ENCODE measurements at regions of chr6 and their contacts with region 1.

Region 1: DNA sequence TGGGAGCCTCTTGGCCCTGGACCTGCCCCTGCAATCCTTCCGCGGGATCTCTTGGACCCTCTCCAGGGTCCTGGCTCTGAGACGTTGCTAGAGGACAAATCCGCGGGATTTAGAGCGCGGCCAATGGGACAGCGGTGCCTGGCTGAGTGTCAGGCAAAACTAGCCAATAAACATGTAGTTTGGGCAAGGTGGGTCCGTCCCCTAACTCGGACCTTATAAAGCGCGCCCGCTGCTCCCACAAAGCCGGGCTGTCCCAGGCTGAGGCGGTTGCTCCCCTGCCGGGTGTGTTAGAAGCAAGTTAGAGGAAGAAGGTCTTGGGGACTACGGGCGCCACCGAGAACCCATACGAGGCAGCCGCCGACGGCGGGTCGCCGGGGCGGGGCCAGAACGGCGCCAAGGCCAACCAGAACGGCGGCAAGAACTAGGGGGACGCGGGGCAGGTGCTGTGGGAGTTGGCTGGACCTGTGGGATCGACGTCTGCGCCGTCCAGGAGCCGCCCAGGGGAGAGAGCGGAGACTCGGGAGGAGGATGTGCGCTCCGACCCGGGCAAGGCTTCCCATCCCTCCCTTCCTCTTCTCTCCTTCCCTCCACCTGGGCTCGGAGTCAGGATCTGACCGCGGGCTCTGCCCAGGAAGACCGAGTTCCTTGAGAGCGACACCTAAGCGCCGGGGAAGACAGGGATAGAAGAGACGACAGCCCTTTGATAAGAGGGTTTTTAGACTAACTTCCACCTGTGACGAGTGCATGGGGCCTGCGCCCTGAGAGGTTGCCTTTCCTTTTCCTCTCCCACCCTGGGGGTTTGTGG is 6.5 kb upstream of the TMEM14A start:
- DNase-seq: peak; percentile 94
- ATAC-seq: peak; percentile 98
- H3K4me3 ChIP-seq: peak overlapping the region; percentile 56 to 66
- H3K27ac ChIP-seq: peak overlapping the region in 1 of 2 donors; percentile 17
- H3K4me1 ChIP-seq: no peaks in the 10 kb centered on the region
- H3K27me3 ChIP-seq: no peaks in the 10 kb centered on the region

Region 2: DNA sequence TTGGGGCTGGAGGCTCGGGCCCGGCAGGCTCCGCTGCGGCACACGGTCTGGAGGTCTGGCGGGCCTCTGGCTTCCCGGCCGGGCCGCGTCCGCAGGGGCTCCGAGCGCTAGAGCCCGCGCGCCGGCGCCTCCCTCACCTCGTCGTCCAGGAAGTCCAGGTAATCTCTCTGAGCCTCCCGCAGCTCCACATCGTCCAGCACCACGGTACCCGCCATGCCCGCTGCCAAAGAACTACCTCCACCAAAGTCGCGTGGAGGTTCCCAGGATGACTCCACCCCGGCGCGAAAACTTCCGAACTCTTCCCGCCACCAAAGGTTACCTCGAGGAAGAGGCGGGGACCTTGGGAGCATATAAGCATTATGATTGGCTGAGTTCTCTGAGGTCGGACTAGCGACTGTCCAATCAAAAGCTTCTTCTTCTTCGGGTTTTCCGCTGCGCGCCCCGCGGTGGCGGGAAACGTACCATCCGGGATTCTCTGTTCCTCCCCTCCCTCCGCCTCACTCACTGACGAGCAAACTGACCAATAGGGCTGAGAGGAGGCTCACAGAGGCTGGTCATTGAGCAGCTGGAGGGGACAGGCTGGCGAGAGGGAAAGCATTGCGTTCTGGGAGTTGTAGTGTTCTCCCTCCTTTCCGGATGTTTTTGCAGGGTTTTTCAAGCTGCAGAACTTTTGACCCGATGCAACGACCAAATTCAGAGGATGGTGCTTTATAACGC is 379.8 kb before region 1 on chr6 and contains the start of gene MCM3:
- intact Hi-C with region 1: loop called (anchors 2 to 10 kb)
- DNase-seq: peak; percentile 97 to 98
- ATAC-seq: peak; percentile 100
- H3K4me3 ChIP-seq: peak within 1 kb of the TSS; percentile 59 to 63
- H3K27ac ChIP-seq: peak within 1 kb of the TSS in 1 of 2 donors; percentile 5
- H3K4me1 ChIP-seq: peaks cover 2 to 4% of the 10 kb centered on the region in 2 donors
- H3K27me3 ChIP-seq: no peaks in the 10 kb centered on the region
- total RNA-seq, gene MCM3: 24.5 to 30.5 TPM

Region 3: GRCh38 chr6:52419809-52420670 is 244.3 kb before region 1 on chr6 and contains the start of gene EFHC1:
- intact Hi-C with region 1: loop called (anchors 1 to 2 kb)
- DNase-seq: peak; percentile 99 to 100
- ATAC-seq: peak; percentile 99
- H3K4me3 ChIP-seq: peak within 1 kb of the TSS; percentile 46 to 61
- H3K27ac ChIP-seq: peak within 1 kb of the TSS in 1 of 2 donors; percentile 73
- H3K4me1 ChIP-seq: peaks cover 0 to 5% of the 10 kb centered on the region in 2 donors
- H3K27me3 ChIP-seq: no peaks in the 10 kb centered on the region
- total RNA-seq, gene EFHC1: 13.2 to 29.0 TPM

Region 4: GRCh38 chr6:52497652-52498408 is 166.6 kb before region 1 on chr6:
- intact Hi-C with region 1: loop called (anchors 5 to 10 kb)
- DNase-seq: no peak
- ATAC-seq: no peak
- H3K4me3 ChIP-seq: no peak overlapping the region
- H3K27ac ChIP-seq: peak overlapping the region; percentile 75 to 79
- H3K4me1 ChIP-seq: peaks cover 6 to 12% of the 10 kb centered on the region in 2 donors
- H3K27me3 ChIP-seq: no peaks in the 10 kb centered on the region

Region 5: DNA sequence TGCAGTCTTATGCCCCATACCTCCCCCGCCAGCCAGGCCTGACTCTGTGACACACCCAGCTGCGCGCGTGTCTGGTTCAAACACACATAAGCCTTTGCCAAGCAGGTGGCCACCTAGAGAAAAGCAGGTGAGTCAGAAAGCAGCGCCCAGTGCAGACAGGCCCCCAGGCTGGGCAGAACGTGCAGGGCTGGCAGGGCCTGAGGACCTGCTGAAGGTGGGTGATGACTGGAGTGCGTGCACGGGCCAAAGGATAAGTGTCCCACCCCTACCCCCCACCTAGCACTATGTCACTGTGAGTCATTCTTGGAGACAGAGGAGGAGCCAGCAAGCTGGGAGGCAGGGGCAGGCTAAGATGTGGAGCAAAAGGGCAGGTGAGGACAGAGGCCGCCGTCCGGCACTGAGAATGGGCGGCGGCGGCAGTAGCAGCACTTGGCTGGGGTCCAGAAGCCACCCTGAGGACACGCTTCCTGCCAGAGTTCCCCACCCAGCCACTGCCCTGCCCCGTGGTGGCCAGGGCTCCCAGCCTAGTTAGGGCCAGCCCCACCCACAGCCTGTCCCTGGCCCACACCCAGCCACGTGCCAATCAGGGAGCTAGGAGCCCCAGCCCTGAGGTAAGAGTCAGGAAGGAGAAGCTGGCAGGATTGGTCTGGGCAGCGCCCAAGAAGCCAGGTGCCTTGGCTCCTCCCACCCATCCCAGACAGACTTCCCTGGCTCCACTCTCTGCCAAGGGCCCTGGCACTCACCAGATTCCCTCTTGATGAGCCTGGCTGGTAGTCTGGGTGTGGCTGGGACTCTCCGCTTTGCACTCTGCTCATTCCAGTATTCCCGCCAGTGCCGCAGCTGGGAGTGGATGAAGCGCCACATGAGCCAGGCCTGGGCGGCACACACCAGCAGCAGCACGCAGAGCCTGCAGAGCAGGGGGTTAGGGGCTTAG is 160.3 kb before region 1 on chr6:
- intact Hi-C with region 1: loop called (anchors 5 to 10 kb)
- DNase-seq: peak; percentile 91 to 94
- ATAC-seq: peak; percentile 83
- H3K4me3 ChIP-seq: no peak overlapping the region
- H3K27ac ChIP-seq: peak overlapping the region in 1 of 2 donors; percentile 60
- H3K4me1 ChIP-seq: peaks cover 0 to 6% of the 10 kb centered on the region in 2 donors
- H3K27me3 ChIP-seq: no peaks in the 10 kb centered on the region

Region 6: DNA sequence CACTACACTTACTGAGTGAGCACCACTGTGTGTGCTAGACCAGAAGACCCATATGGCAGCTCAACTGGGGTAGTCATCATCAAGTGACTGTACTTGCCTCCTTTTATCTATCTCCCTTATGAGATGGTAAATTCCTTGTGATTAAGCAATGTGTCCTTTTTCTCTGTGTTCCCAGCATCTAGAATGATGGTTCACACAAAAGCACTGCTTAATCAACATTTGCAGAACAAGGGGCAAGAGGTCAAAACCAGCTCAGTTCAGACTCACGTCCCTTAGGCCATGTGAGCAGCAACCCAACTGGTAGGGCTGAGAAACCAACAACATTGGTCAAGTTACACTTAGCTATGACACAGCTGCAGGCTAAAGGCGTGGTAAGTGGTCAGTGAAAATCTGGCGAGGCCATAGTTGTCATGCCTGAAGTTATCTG is 97.5 kb before region 1 on chr6:
- intact Hi-C with region 1: no loop called
- DNase-seq: peak in 1 of 2 donors; percentile 55
- ATAC-seq: no peak
- H3K4me3 ChIP-seq: no peak overlapping the region
- H3K27ac ChIP-seq: peak overlapping the region; percentile 29 to 58
- H3K4me1 ChIP-seq: peaks cover 10 to 14% of the 10 kb centered on the region in 2 donors
- H3K27me3 ChIP-seq: no peaks in the 10 kb centered on the region

Region 7: GRCh38 chr6:52598123-52598823 is 66.1 kb before region 1 on chr6:
- intact Hi-C with region 1: loop called (anchors 5 kb)
- DNase-seq: peak; percentile 71 to 84
- ATAC-seq: peak; percentile 79
- H3K4me3 ChIP-seq: no peak overlapping the region
- H3K27ac ChIP-seq: peak overlapping the region in 1 of 2 donors; percentile 41
- H3K4me1 ChIP-seq: peaks cover 2 to 3% of the 10 kb centered on the region in 2 donors
- H3K27me3 ChIP-seq: no peaks in the 10 kb centered on the region

Region 8: GRCh38 chr6:52995913-52996645 is 331.7 kb after region 1 on chr6:
- intact Hi-C with region 1: loop called in 1 of 2 experiments (anchors 10 kb)
- DNase-seq: peak in 1 of 2 donors; percentile 57
- ATAC-seq: no peak
- H3K4me3 ChIP-seq: no peak overlapping the region
- H3K27ac ChIP-seq: peak overlapping the region in 1 of 2 donors; percentile 45
- H3K4me1 ChIP-seq: no peaks in the 10 kb centered on the region
- H3K27me3 ChIP-seq: no peaks in the 10 kb centered on the region